ENCODE measurements at regions of chr2 and their contacts with region 1.

Region 1: DNA sequence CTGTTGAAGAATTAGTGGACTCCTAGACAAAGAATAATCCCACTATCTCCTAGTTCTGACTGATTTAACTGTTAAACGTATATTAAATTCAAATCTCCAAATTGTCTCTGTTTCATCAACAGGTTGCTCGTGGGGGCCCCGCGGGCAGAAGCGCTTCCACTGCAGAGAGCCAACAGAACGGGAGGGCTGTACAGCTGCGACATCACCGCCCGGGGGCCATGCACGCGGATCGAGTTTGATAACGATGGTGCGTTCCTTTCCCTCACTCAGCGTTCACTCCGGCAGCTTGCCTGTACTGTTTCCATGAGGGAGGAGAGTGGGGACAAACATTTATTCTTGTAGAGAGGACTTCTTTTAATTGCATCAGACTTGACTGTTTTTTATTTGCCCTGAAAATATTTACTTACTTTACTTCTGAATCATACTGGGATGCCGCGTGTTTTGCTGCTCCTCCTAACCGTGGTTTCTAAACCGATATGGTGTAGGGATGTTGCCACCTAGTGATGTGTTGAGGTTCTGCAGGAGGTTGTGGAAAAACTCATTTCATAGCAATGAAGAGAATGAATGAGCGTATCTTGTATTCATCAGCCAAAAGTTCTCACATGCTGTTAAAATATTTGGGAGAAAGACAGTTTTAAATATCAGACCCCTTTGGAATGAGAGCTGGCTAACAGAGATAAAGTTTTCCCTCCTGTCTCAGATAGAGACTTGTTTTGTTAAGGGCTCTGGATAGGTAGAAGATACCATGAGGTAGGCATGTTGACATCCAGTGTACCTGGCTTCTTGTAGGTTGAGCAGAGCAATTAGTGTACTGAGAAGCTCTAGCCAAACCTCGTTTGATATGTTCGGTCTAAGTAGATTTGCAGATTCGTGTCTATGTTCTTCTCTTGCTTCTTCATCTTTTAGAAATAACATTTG is 38.3 kb downstream of the ITGA6 start:
- DNase-seq: peak; percentile 22 to 73
- ATAC-seq: peak; percentile 56 to 80 (median 70)
- H3K4me3 ChIP-seq: peak overlapping the region in 5 of 10 donors; percentile 12 to 33 (median 20)
- H3K27ac ChIP-seq: peak overlapping the region in 3 of 10 donors; percentile 16 to 59 (median 21)
- H3K4me1 ChIP-seq: peaks cover 0 to 59% (median 43%) of the 10 kb centered on the region in 9 donors
- H3K27me3 ChIP-seq: peaks cover 0 to 6% (median 0%) of the 10 kb centered on the region in 7 donors
- CTCF ChIP-seq: peak; percentile 67 to 92 (median 86)

Region 2: GRCh38 chr2:171574149-171574795 is 891.4 kb before region 1 on chr2:
- intact Hi-C with region 1: loop called in 1 of 10 experiments (anchors 10 kb)
- DNase-seq: peak; percentile 72 to 83
- ATAC-seq: peak; percentile 92 to 98 (median 96)
- H3K4me3 ChIP-seq: peak overlapping the region in 2 of 10 donors; percentile 12 to 16
- H3K27ac ChIP-seq: no peak overlapping the region
- H3K4me1 ChIP-seq: peaks cover 0 to 3% (median 0%) of the 10 kb centered on the region in 9 donors
- H3K27me3 ChIP-seq: peaks cover 0 to 11% (median 0%) of the 10 kb centered on the region in 7 donors
- CTCF ChIP-seq: peak; percentile 89 to 99 (median 98)

Region 3: DNA sequence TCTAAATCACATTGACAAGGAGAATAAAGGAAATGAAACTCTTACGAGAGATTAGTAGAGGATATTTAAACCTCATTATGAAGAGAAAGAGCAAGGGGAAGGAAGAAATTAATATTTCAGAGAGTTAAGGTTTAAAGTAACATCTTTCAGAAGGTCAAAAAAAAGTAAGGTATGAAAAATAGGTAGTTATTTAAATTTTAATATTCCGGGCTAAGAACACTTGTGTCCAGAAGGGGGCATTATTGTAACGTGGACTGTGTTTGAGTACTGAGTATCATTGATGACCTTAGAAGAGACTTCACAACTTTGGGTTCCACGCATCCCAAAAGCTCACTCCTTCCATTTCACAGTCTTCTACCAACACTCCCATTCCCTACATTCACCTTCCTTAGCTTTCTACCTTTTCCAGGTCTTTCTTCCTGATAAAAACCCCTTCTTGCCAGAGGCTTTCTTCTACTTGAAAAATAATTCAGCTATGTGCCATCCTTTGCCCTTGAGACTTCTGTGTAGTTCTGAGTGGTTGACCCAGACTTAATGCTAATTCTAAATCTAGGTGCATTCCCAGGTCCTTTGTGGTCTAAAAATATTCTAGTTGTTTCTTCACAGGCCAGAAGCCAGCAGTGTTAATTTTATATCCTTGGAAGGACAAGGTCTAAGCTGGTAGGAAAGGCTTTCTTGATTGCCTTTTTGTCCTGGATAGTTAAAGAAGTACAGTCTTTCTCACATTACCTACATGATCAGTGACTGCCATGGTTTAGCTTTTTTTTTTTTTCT is 761.9 kb before region 1 on chr2:
- intact Hi-C with region 1: loop called in 1 of 10 experiments (anchors 10 kb)
- DNase-seq: no peak
- ATAC-seq: peak in 7 of 8 donors; percentile 28 to 73 (median 59)
- H3K4me3 ChIP-seq: no peak overlapping the region
- H3K27ac ChIP-seq: peak overlapping the region in 7 of 10 donors; percentile 4 to 68 (median 57)
- H3K4me1 ChIP-seq: peaks cover 4 to 52% (median 24%) of the 10 kb centered on the region in 9 donors
- H3K27me3 ChIP-seq: no peaks in the 10 kb centered on the region
- CTCF ChIP-seq: peak; percentile 19 to 61 (median 51)

Region 4: GRCh38 chr2:172234716-172235691 is 230.7 kb before region 1 on chr2:
- intact Hi-C with region 1: loop called in 1 of 10 experiments (anchors 5 kb)
- DNase-seq: peak; percentile 13 to 21
- ATAC-seq: peak in 7 of 8 donors; percentile 20 to 47 (median 32)
- H3K4me3 ChIP-seq: peak overlapping the region; percentile 23 to 62 (median 48)
- H3K27ac ChIP-seq: peak overlapping the region in 6 of 10 donors; percentile 8 to 73 (median 48)
- H3K4me1 ChIP-seq: peaks cover 0 to 41% (median 21%) of the 10 kb centered on the region in 9 donors
- H3K27me3 ChIP-seq: peaks cover 0 to 52% (median 43%) of the 10 kb centered on the region in 7 donors
- CTCF ChIP-seq: no peak

Region 5: GRCh38 chr2:172285010-172285621 is 180.6 kb before region 1 on chr2:
- intact Hi-C with region 1: loop called in 2 of 10 experiments (anchors 10 kb)
- DNase-seq: peak; percentile 16 to 27
- ATAC-seq: peak; percentile 35 to 70 (median 60)
- H3K4me3 ChIP-seq: no peak overlapping the region
- H3K27ac ChIP-seq: peak overlapping the region in 9 of 10 donors; percentile 15 to 79 (median 58)
- H3K4me1 ChIP-seq: peaks cover 2 to 67% (median 44%) of the 10 kb centered on the region in 9 donors
- H3K27me3 ChIP-seq: no peaks in the 10 kb centered on the region
- CTCF ChIP-seq: no peak

Region 6: DNA sequence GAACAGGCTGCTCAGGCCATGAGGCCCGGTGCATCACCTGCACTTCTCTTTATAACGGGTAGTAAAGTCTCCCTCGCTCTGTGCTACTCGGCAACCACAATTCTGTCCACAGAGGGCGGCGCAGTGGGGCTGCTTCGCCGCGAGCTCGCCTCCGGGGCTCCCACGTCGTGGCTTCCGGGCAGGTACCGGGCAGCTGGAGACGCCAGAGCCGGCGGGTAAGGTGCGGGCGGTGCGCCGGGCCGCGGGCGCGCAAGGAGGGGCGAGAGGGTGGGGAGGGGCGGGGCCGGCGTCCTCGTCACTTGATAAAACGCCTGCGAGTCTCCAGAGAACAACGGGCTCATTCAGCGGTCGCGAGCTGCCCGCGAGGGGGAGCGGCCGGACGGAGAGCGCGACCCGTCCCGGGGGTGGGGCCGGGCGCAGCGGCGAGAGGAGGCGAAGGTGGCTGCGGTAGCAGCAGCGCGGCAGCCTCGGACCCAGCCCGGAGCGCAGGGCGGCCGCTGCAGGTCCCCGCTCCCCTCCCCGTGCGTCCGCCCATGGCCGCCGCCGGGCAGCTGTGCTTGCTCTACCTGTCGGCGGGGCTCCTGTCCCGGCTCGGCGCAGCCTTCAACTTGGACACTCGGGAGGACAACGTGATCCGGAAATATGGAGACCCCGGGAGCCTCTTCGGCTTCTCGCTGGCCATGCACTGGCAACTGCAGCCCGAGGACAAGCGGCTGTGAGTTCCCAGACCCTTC is 38.3 kb before region 1 on chr2 and contains the start of gene ITGA6:
- intact Hi-C with region 1: loop called in 5 of 10 experiments (anchors 2 to 5 kb)
- DNase-seq: peak; percentile 66 to 81
- ATAC-seq: peak; percentile 70 to 92 (median 76)
- H3K4me3 ChIP-seq: peak within 1 kb of the TSS; percentile 60 to 94 (median 80)
- H3K27ac ChIP-seq: peak within 1 kb of the TSS; percentile 64 to 97 (median 94)
- H3K4me1 ChIP-seq: peaks cover 5 to 51% (median 23%) of the 10 kb centered on the region in 9 donors
- H3K27me3 ChIP-seq: peaks cover 0 to 39% (median 0%) of the 10 kb centered on the region in 7 donors
- CTCF ChIP-seq: peak in 6 of 9 donors; percentile 22 to 57 (median 41)
- total RNA-seq, gene ITGA6: 36.0 to 68.3 (median 46.8) TPM

Region 7: DNA sequence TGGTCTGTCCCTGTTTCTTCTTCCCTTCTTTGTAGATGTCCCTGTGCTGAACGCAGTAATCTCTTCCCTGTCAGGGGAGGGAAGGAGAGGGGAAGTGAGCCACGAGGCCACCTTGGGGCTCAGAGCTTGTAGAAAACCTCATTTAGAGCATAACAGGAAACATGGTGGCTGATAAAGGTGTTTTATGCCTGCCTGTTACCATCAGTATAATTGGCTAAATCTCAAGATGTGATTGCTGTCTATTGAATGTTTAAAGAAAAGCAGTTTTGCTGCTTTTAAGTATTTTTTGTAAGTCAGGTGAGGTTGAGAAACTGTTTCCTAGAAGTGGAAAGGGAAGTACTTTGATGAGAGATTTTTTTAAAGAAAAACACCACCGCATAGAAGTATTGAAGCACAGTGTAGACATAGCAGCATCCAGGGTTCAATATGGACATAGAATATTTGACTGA is 30.5 kb after region 1 on chr2:
- intact Hi-C with region 1: no loop called
- DNase-seq: no peak
- ATAC-seq: no peak
- H3K4me3 ChIP-seq: no peak overlapping the region
- H3K27ac ChIP-seq: peak overlapping the region in 1 of 10 donors; percentile 31
- H3K4me1 ChIP-seq: peaks cover 0 to 14% (median 0%) of the 10 kb centered on the region in 9 donors
- H3K27me3 ChIP-seq: no peaks in the 10 kb centered on the region
- CTCF ChIP-seq: no peak